ENCODE measurements at regions of chr5 and their contacts with region 1.

Region 1: DNA sequence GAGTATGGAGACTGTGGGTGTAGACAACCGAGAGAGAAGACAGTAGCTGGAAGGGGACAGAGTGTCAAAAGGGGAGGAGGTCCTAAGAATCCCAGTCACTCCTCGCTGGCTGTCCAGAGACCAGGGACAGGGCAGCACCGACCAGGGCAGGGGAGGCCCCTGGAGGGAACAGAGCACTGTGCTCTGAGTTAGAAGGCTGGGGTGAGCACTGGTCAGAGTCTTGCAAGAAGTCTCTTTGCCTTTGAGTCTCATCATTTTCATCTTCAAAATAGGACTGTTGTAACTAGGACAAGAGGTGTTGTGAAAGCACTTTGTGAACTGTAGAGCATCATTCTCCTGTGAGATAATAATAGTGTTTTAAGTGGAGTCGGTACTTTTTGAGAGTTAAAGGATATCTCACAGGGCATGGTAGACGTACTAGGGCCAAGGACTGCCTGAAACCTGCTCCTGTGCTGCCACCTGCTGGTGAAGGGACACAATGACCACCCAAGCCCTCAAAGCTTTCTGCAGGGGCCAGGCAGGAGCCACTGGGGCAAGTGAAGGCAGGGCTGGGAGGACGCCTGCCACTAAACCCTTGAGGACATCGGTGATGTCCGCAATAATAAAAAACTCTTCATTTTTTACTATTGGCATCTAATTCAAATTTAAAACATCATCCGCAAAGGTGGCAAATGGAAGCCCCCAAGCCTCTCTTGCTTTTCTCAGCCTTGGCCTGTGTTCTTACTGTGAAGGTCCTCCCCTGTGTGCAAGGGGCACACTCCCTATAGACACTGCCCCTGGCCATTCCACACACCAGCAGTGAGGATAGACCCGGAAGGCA is 28.2 kb downstream of the SLC6A7 start:
- DNase-seq: peak; percentile 51 to 81 (median 70)
- ATAC-seq: peak; percentile 90
- H3K4me3 ChIP-seq: no peak overlapping the region
- H3K4me3 Mint-ChIP-seq: no peak overlapping the region
- H3K27ac ChIP-seq: no peak overlapping the region
- H3K27ac Mint-ChIP-seq: no peak overlapping the region
- H3K4me1 ChIP-seq: no peaks in the 10 kb centered on the region
- H3K4me1 Mint-ChIP-seq: peaks cover 0 to 5% (median 0%) of the 10 kb centered on the region in 7 donors
- H3K27me3 ChIP-seq: peaks cover 0 to 2% of the 10 kb centered on the region in 2 donors
- H3K27me3 Mint-ChIP-seq: peaks cover 0 to 14% (median 2%) of the 10 kb centered on the region in 5 donors

Region 2: GRCh38 chr5:149205625-149206523 is 1012.2 kb before region 1 on chr5:
- CTCF ChIA-PET with region 1: no interaction called
- POLR2A ChIA-PET with region 1: no interaction called
- intact Hi-C with region 1: no loop called
- DNase-seq: no peak
- ATAC-seq: no peak
- H3K4me3 ChIP-seq: no peak overlapping the region
- H3K4me3 Mint-ChIP-seq: no peak overlapping the region
- H3K27ac ChIP-seq: no peak overlapping the region
- H3K27ac Mint-ChIP-seq: no peak overlapping the region
- H3K4me1 ChIP-seq: no peaks in the 10 kb centered on the region
- H3K4me1 Mint-ChIP-seq: peaks cover 0 to 4% (median 0%) of the 10 kb centered on the region in 7 donors
- H3K27me3 ChIP-seq: no peaks in the 10 kb centered on the region
- H3K27me3 Mint-ChIP-seq: no peaks in the 10 kb centered on the region

Region 3: GRCh38 chr5:149636851-149637246 is 581.2 kb before region 1 on chr5:
- CTCF ChIA-PET with region 1: no interaction called
- POLR2A ChIA-PET with region 1: no interaction called
- intact Hi-C with region 1: loop called (anchors 1 to 2 kb)
- DNase-seq: peak in 7 of 9 donors; percentile 24 to 68 (median 43)
- ATAC-seq: peak; percentile 77
- H3K4me3 ChIP-seq: no peak overlapping the region
- H3K4me3 Mint-ChIP-seq: no peak overlapping the region
- H3K27ac ChIP-seq: no peak overlapping the region
- H3K27ac Mint-ChIP-seq: no peak overlapping the region
- H3K4me1 ChIP-seq: no peaks in the 10 kb centered on the region
- H3K4me1 Mint-ChIP-seq: peaks cover 0 to 8% (median 0%) of the 10 kb centered on the region in 7 donors
- H3K27me3 ChIP-seq: no peaks in the 10 kb centered on the region
- H3K27me3 Mint-ChIP-seq: peaks cover 0 to 3% (median 0%) of the 10 kb centered on the region in 5 donors

Region 4: GRCh38 chr5:149932445-149933350 is 285.4 kb before region 1 on chr5:
- CTCF ChIA-PET with region 1: no interaction called
- POLR2A ChIA-PET with region 1: no interaction called
- intact Hi-C with region 1: no loop called
- DNase-seq: no peak
- ATAC-seq: no peak
- H3K4me3 ChIP-seq: no peak overlapping the region
- H3K4me3 Mint-ChIP-seq: no peak overlapping the region
- H3K27ac ChIP-seq: no peak overlapping the region
- H3K27ac Mint-ChIP-seq: no peak overlapping the region
- H3K4me1 ChIP-seq: no peaks in the 10 kb centered on the region
- H3K4me1 Mint-ChIP-seq: peaks cover 0 to 9% (median 0%) of the 10 kb centered on the region in 7 donors
- H3K27me3 ChIP-seq: no peaks in the 10 kb centered on the region
- H3K27me3 Mint-ChIP-seq: peaks cover 14 to 34% (median 24%) of the 10 kb centered on the region in 5 donors

Region 5: DNA sequence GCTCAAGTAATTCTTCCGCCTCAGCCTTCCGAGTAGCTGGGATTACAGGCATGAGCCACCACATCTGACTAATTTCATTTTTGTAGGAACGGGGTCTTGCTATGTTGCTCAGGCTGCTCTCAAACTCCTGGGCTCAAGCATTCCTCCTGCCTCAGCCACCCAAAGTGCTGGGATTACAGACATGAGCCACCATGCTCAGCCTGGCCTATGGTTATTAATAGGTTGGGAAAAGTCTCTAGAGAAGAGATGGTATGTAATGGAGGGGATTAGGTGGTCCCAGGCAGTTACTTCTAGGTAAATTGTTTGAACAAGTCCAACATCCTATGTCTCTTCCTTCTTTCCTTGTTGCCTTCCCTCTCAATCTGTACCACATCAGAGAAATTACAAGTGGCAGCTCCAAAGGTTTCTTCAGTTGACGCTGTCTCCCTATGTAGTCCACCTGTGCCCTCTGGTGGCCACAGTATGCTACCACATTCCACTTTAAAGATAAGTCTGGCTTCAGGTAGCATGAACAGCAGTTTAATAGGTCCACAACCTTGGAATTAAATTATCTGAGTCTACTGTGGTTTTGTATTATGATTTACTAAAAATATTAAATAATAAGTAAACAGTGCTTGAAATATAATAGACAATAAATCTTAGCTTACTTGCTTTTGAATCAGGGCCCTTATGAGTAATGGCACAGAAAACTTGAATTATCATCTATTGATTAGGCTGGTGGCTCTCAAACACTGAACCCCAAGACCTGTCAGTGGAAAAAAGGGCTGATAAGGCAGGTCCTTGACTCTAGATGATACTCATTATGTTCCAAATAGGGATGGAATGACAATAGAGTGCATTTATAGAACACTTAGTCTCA is 227.3 kb before region 1 on chr5:
- CTCF ChIA-PET with region 1: no interaction called
- POLR2A ChIA-PET with region 1: no interaction called
- intact Hi-C with region 1: loop called in 1 of 2 experiments (anchors 1 kb)
- DNase-seq: peak; percentile 28 to 65 (median 57)
- ATAC-seq: peak; percentile 98
- H3K4me3 ChIP-seq: no peak overlapping the region
- H3K4me3 Mint-ChIP-seq: no peak overlapping the region
- H3K27ac ChIP-seq: no peak overlapping the region
- H3K27ac Mint-ChIP-seq: no peak overlapping the region
- H3K4me1 ChIP-seq: no peaks in the 10 kb centered on the region
- H3K4me1 Mint-ChIP-seq: no peaks in the 10 kb centered on the region
- H3K27me3 ChIP-seq: no peaks in the 10 kb centered on the region
- H3K27me3 Mint-ChIP-seq: no peaks in the 10 kb centered on the region

Region 6: GRCh38 chr5:150129813-150130492 is 88.1 kb before region 1 on chr5:
- CTCF ChIA-PET with region 1: interaction called, 3 read pairs
- POLR2A ChIA-PET with region 1: no interaction called
- intact Hi-C with region 1: loop called (anchors 1 kb)
- DNase-seq: peak in 7 of 9 donors; percentile 6 to 55 (median 19)
- ATAC-seq: peak; percentile 75
- H3K4me3 ChIP-seq: no peak overlapping the region
- H3K4me3 Mint-ChIP-seq: no peak overlapping the region
- H3K27ac ChIP-seq: no peak overlapping the region
- H3K27ac Mint-ChIP-seq: peak overlapping the region in 1 of 9 donors; percentile 55
- H3K4me1 ChIP-seq: no peaks in the 10 kb centered on the region
- H3K4me1 Mint-ChIP-seq: peaks cover 0 to 10% (median 0%) of the 10 kb centered on the region in 7 donors
- H3K27me3 ChIP-seq: no peaks in the 10 kb centered on the region
- H3K27me3 Mint-ChIP-seq: peaks cover 0 to 3% (median 0%) of the 10 kb centered on the region in 5 donors

Region 7: DNA sequence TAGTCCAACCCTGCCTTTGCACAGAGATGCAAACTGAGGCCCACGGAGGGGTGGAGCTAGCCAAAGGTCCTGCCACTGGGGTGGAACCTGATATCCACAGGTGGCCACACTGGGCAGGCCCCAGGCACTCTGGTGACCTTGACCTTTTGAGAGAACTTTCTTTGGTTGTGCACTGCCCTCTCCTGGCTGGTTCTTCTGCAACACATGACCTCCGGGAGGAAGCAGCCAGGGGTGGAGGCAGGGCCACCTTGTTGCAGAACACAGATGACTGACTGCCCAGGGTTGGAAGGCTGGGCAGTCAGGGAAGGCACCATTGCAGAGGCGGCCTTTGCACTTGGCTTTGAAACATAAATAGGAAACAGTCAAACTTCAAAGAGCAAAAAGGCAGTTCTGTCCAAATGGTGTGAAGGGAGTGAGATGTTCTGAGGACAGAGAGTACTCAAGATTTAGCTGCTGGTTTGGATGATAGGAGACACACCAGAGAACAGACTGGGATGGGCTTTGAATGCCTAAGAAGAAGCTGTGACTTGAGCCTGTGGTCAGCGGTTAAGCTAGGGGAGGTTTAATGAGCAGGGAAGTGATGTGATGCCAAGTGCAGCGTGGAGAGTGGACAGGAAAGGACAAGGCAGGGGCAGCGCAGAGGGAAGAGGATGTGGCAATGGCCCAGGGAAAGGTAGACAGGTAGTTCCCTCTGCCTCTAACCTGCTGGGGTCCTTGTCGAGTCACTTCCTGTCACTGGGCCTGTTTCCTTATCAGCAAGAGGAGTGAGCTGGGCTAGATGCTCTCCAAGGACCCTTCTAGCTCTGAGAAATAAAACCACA is 132.7 kb after region 1 on chr5:
- CTCF ChIA-PET with region 1: no interaction called
- POLR2A ChIA-PET with region 1: no interaction called
- intact Hi-C with region 1: loop called in 1 of 2 experiments (anchors 5 kb)
- DNase-seq: peak in 6 of 9 donors; percentile 18 to 55 (median 31)
- ATAC-seq: peak; percentile 88
- H3K4me3 ChIP-seq: no peak overlapping the region
- H3K4me3 Mint-ChIP-seq: peak overlapping the region in 3 of 10 donors; percentile 8 to 68 (median 26)
- H3K27ac ChIP-seq: peak overlapping the region; percentile 3
- H3K27ac Mint-ChIP-seq: peak overlapping the region; percentile 17 to 88 (median 78)
- H3K4me1 ChIP-seq: peaks cover 0 to 7% of the 10 kb centered on the region in 2 donors
- H3K4me1 Mint-ChIP-seq: peaks cover 10 to 14% (median 13%) of the 10 kb centered on the region in 7 donors
- H3K27me3 ChIP-seq: no peaks in the 10 kb centered on the region
- H3K27me3 Mint-ChIP-seq: peaks cover 0 to 3% (median 0%) of the 10 kb centered on the region in 5 donors